ENCODE measurements at regions of chrX and their contacts with region 1.

Region 1: GRCh38 chrX:41391606-41392005 is 55.5 kb upstream of the NYX start:
- DNase-seq: no peak
- ATAC-seq: no peak
- H3K4me3 ChIP-seq: no peak overlapping the region
- H3K4me3 Mint-ChIP-seq: no peak overlapping the region
- H3K27ac ChIP-seq: no peak overlapping the region
- H3K27ac Mint-ChIP-seq: no peak overlapping the region
- H3K4me1 ChIP-seq: no peaks in the 10 kb centered on the region
- H3K4me1 Mint-ChIP-seq: no peaks in the 10 kb centered on the region
- H3K27me3 ChIP-seq: no peaks in the 10 kb centered on the region
- H3K27me3 Mint-ChIP-seq: peaks cover 0 to 4% of the 10 kb centered on the region in 2 donors

Region 2: GRCh38 chrX:42678125-42678524 is 1286.5 kb after region 1 on chrX:
- CTCF ChIA-PET with region 1: no interaction called
- POLR2A ChIA-PET with region 1: interaction called in 1 of 2 experiments, 10 read pairs
- DNase-seq: no peak
- ATAC-seq: no peak
- H3K4me3 ChIP-seq: no peak overlapping the region
- H3K4me3 Mint-ChIP-seq: no peak overlapping the region
- H3K27ac ChIP-seq: no peak overlapping the region
- H3K27ac Mint-ChIP-seq: no peak overlapping the region
- H3K4me1 ChIP-seq: no peaks in the 10 kb centered on the region
- H3K4me1 Mint-ChIP-seq: no peaks in the 10 kb centered on the region
- H3K27me3 ChIP-seq: no peaks in the 10 kb centered on the region
- H3K27me3 Mint-ChIP-seq: no peaks in the 10 kb centered on the region